ENCODE measurements at regions of chr1 and their contacts with region 1.

Region 1: DNA sequence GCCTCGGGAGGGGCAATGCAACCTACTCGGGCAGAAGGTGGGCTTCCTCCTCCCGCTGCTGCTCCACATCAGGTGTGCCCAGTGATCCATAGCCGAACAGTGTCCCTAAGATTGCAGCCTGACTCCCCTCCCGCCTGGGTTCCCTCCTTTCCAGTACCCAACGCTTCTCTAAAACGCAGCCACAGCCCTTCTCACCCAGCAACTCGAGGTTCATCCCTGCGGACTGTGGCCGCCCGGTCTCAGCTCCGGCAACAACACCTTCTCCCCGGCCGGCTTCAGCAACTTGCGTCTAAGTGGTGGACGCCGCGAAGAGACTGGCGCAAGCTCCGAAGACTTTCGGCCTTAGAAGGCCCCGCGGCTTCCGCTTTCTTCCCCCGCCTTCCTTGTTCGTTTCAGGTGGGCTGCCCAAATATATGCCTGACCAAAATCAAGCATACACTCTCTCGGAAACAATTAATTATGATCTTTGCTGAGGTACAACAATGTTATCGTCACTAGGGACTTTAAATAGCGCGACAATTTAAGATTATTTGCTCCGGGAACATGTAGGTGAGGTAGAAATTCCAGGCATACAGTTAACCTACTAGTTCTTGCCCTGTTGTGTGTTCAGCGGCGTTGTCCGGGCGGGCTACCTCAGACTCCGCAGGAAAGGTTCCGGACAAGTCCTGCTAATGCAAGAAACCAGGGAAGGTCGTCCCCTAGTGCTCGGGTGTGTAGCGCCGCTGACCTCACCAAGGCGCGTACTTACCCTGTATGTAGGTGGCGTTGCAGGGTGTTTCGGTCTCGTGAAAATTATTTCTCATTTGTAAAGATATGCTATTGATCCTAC is at the start of gene RBBP5:
- DNase-seq: peak; percentile 94
- H3K4me3 ChIP-seq: peak within 1 kb of the TSS; percentile 99
- CTCF ChIP-seq: peak; percentile 88

Region 2: GRCh38 chr1:204959374-204959773 is 162.5 kb before region 1 on chr1:
- CTCF ChIA-PET with region 1: no interaction called
- POLR2A ChIA-PET with region 1: no interaction called
- DNase-seq: no peak
- H3K4me3 ChIP-seq: no peak overlapping the region
- CTCF ChIP-seq: no peak

Region 3: DNA sequence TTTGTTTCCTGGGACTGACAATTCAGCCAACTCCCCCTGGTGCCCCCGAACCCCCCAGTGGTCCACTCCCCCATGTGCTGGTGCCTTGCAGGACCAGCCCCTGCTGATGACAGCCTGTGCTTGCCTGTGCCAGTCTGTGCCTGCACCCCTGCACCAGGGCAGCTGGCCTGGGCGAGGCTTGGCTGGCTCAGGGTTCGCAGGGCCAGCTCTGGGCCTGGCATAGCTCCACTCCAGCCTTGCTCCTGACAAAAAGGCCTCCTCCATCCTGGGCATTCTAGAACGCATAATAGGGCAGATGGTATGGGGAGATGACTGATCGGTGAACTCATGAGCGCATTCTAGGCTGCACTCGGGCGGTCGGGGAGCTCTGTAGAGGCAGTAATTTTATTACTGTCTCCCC is 73.5 kb before region 1 on chr1:
- CTCF ChIA-PET with region 1: no interaction called
- POLR2A ChIA-PET with region 1: no interaction called
- DNase-seq: no peak
- H3K4me3 ChIP-seq: no peak overlapping the region
- CTCF ChIP-seq: no peak

Region 4: DNA sequence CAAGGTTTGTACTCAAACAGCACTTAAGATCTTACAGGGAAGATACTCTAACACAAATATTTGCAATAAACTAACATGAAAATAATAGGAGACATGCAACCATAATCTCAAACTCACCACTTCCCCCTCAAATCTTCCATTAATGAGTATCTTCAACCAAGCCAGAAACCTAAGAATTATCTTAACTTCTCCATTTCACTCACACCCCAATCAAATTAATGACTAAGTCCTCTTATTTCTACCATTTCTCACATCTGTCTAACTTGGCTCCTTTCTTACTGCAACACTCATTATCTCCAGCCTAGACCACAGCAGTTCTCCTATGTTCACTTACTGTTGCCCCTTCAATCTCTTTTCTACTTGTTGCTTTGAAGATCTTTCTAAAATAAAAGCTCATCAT is 10.5 kb before region 1 on chr1:
- CTCF ChIA-PET with region 1: interaction called, 22 read pairs
- POLR2A ChIA-PET with region 1: interaction called, 4 read pairs
- DNase-seq: no peak
- H3K4me3 ChIP-seq: no peak overlapping the region
- CTCF ChIP-seq: no peak

Region 5: GRCh38 chr1:205133287-205133686 is 11.4 kb after region 1 on chr1:
- CTCF ChIA-PET with region 1: interaction called, 239 read pairs
- POLR2A ChIA-PET with region 1: no interaction called
- DNase-seq: no peak
- H3K4me3 ChIP-seq: no peak overlapping the region
- CTCF ChIP-seq: no peak

Measured in AG04449 (cell line).